Activated CD4-positive, alpha-beta memory T cell treated with anti-CD3 and anti-CD28 coated beads for 36 hours (primary cell): ENCODE measurements at regions of chr18 and their contacts with region 1.

Region 1: DNA sequence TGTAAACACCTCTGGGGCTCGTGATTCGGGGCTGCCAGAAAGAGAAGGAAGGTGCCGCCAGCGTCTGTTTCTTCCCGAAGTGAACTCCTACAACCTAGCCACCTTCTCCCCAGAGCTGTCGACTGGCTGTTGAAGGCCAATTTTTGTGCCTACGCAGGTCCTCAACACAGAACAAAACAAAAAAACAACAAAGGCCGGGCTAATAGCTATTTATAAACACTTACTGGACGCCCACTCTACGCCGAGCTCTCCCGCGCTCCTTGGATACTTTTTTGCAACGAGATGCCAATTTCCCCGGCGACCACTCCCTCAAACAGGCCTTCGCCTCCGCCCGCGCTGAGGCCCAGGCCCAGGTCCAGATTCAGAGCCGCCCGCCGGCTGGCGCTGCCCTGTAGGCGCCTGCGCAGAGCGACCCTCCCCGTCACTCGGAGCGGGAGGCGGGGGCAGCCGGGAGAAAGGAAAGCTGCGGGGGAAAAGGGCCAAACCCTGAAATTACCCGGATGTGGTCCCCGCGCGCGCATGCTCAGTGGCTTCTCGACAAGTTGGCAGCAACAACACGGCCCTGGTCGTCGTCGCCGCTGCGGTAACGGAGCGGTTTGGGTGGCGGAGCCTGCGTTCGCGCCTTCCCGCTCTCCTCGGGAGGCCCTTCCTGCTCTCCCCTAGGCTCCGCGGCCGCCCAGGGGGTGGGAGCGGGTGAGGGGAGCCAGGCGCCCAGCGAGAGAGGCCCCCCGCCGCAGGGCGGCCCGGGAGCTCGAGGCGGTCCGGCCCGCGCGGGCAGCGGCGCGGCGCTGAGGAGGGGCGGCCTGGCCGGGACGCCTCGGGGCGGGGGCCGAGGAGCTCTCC is at the start of gene SMAD4:
- DNase-seq: peak; percentile 99
- H3K4me3 Mint-ChIP-seq: peak within 1 kb of the TSS; percentile 99
- H3K27ac Mint-ChIP-seq: peak within 1 kb of the TSS; percentile 91
- H3K4me1 Mint-ChIP-seq: peaks cover 58% of the 10 kb centered on the region
- H3K27me3 Mint-ChIP-seq: no peaks in the 10 kb centered on the region
- total RNA-seq, gene SMAD4: 72.5 to 72.7 TPM

Region 2: DNA sequence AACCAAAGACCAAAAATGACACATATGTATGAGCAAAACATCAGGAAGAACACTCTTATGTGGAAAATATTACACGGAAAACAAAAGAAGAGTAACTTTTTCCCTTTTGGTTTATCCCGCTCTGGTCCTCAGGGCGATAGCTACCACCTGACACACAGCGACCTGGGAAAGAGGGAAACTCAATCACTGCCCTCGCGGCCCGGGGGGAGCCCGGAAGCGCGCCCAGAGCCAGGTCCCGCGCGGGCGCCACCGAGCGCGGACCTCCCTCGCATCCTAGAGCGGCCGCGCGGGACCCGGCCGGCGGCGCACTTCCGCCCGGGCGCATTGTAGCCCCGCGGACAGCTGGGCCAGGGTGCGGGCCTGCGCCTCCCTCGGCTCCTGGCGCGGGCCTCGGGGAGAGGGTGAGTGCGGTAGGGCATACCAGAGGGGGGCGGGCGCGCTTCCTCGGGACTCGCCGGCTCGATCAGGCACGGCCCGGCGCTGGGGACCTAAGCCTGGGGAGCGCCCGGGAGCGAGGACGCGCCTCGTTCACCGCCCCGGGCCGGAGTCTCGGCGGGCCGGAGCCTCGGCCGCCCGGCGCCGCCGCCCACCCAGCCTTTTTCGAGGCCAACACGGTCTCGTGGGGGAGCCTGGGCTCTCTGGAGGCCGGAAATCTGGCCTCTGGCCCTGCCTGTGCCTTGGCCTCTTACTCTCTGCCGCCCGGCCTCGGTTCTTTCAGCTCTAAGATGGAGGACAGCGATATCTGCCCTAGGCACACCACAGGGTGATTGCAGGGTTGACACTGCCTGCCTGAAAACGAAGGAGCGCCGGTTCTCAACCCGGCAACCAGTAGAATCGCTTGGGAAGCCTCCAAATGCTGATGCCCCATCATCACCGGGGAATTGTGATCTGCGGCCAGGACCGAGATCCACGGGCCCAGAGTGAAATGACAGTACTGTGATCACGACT is 61.9 kb before region 1 on chr18 and contains the start of gene ELAC1:
- CTCF ChIA-PET with region 1: interaction called, 13 read pairs
- POLR2A ChIA-PET with region 1: interaction called, 17 read pairs
- intact Hi-C with region 1: loop called (anchors 1 kb)
- DNase-seq: peak; percentile 71
- H3K4me3 Mint-ChIP-seq: peak within 1 kb of the TSS; percentile 96
- H3K27ac Mint-ChIP-seq: peak within 1 kb of the TSS; percentile 94
- H3K4me1 Mint-ChIP-seq: peaks cover 26% of the 10 kb centered on the region
- H3K27me3 Mint-ChIP-seq: no peaks in the 10 kb centered on the region
- total RNA-seq, gene ELAC1: 4.7 to 5.9 TPM

Region 3: DNA sequence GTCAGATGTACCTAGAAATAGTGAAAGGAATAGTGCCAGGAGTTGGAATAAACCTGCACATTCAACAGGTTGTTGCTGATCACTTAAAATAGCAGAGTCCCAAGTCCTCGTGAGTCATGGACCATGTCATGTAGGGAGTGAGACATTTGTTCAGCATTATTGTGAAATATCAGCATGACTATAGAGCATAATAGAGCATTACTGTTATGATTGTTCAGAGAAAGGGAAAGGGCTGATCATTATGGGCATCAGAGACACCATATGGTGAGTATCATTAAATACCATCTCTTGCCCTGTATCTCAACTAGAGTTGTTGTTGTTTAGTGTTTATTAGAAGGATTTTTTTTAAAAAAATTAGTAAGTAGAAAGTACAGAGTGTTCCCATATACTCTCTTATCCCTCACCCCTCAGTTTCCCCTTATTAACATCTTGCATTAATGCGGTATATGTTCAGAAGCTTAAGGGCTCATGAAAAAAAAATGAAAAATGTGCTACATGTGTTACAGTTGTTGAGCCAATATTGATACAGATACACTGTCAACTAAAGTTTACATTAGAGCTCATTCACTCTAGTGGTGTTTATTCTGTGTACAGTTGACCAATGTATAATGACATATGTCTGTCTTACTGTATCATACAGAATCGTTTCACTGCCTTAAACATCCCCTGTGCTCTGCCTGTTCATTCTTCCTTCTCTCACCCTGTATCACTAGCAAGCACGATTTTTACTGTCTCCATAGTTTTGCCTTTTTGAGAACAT is 56.4 kb before region 1 on chr18:
- CTCF ChIA-PET with region 1: interaction called, 13 read pairs
- POLR2A ChIA-PET with region 1: interaction called, 17 read pairs
- intact Hi-C with region 1: loop called (anchors 1 kb)
- DNase-seq: peak; percentile 23
- H3K4me3 Mint-ChIP-seq: no peak overlapping the region
- H3K27ac Mint-ChIP-seq: peak overlapping the region; percentile 75
- H3K4me1 Mint-ChIP-seq: peaks cover 34% of the 10 kb centered on the region
- H3K27me3 Mint-ChIP-seq: no peaks in the 10 kb centered on the region

Region 4: GRCh38 chr18:51051105-51051712 is 21.3 kb after region 1 on chr18:
- CTCF ChIA-PET with region 1: interaction called, 28 read pairs
- POLR2A ChIA-PET with region 1: interaction called, 8 read pairs
- intact Hi-C with region 1: loop called (anchors 2 kb)
- DNase-seq: no peak
- H3K4me3 Mint-ChIP-seq: no peak overlapping the region
- H3K27ac Mint-ChIP-seq: peak overlapping the region; percentile 49
- H3K4me1 Mint-ChIP-seq: peaks cover 39% of the 10 kb centered on the region
- H3K27me3 Mint-ChIP-seq: no peaks in the 10 kb centered on the region

Region 5: GRCh38 chr18:51153659-51154371 is 123.9 kb after region 1 on chr18:
- CTCF ChIA-PET with region 1: no interaction called
- POLR2A ChIA-PET with region 1: no interaction called
- intact Hi-C with region 1: loop called (anchors 5 kb)
- DNase-seq: peak; percentile 70
- H3K4me3 Mint-ChIP-seq: peak overlapping the region; percentile 70
- H3K27ac Mint-ChIP-seq: peak overlapping the region; percentile 97
- H3K4me1 Mint-ChIP-seq: peaks cover 47% of the 10 kb centered on the region
- H3K27me3 Mint-ChIP-seq: no peaks in the 10 kb centered on the region